GM23248 (cell line): ENCODE measurements at regions of chr15 and their contacts with region 1.

Region 1: GRCh38 chr15:50145451-50145872 is 26.4 kb upstream of the ATP8B4 start:
- DNase-seq: peak; percentile 85
- H3K4me3 ChIP-seq: no peak overlapping the region
- H3K27ac ChIP-seq: no peak overlapping the region
- H3K4me1 ChIP-seq: peaks cover 13% of the 10 kb centered on the region
- H3K27me3 ChIP-seq: no peaks in the 10 kb centered on the region

Region 2: GRCh38 chr15:49421991-49422390 is 723.5 kb before region 1 on chr15:
- in situ Hi-C with region 1: loop called (anchors 10 kb)
- DNase-seq: peak; percentile 69
- H3K4me3 ChIP-seq: peak overlapping the region; percentile 99
- H3K27ac ChIP-seq: peak overlapping the region; percentile 80
- H3K4me1 ChIP-seq: peaks cover 15% of the 10 kb centered on the region; the same call in 1 of the 2 replicates
- H3K27me3 ChIP-seq: no peaks in the 10 kb centered on the region

Region 3: DNA sequence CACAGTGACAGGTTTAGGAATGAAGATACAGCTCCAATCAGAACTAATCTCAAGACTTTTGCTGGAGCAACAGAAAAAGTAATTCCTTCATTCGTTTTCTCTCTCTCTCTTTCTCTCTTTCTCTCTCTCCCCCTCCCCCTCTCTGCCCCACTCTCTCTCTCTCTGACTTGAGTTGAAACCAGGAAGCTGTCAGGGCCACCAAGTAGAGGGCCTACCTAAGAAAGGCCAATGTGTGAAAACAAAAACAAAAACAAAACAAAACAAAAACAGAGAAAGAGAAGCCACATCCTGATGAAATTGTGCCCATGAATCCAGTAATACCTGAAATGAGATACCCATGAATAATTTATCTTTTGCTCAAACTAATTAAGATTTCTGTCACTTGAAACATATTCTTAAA is 99.3 kb before region 1 on chr15:
- in situ Hi-C with region 1: no loop called
- DNase-seq: no peak
- H3K4me3 ChIP-seq: no peak overlapping the region
- H3K27ac ChIP-seq: no peak overlapping the region
- H3K4me1 ChIP-seq: peaks cover 33% of the 10 kb centered on the region
- H3K27me3 ChIP-seq: no peaks in the 10 kb centered on the region

Region 4: DNA sequence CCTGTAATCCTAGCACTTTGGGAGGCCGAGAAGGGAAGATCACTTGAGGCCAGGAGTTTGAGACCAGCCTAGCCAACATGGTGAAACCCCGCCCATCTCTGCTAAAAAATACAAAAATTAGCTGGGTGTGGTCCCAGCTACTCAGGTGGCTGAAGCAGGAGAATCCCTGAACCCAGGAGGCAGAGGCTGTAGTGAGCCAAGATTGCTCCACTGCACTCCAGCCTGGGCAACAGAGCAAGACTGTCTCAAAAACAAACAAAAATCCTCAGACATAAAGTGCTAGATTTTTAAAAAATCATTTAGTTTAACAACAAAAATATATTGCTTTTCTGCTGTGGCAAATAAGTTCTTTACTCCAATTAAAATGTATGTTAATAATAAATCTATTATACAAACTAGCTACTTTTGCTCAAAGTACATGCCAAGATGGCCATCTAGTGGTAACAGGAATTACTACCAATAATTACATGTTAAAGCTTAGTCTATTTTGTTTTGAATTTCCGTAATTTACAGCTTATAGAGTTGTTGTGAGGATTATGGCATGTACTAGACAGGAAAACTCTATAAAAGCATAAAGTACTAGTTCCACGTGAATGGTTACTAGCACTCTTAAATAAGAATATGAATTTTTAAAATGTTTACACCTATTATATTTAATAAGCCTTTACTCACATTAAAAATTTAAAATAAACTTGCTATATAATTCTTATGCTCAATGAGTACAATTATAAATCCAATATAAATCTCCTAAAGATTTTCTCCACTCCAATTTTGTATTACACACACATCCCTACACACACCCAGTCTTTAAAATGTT is 170.6 kb after region 1 on chr15:
- in situ Hi-C with region 1: loop called (anchors 10 kb)
- DNase-seq: peak; percentile 71
- H3K4me3 ChIP-seq: no peak overlapping the region
- H3K27ac ChIP-seq: no peak overlapping the region
- H3K4me1 ChIP-seq: no peaks in the 10 kb centered on the region
- H3K27me3 ChIP-seq: no peaks in the 10 kb centered on the region